Panc1 (cell line): ENCODE measurements at regions of chr1 and their contacts with region 1.

Region 1: DNA sequence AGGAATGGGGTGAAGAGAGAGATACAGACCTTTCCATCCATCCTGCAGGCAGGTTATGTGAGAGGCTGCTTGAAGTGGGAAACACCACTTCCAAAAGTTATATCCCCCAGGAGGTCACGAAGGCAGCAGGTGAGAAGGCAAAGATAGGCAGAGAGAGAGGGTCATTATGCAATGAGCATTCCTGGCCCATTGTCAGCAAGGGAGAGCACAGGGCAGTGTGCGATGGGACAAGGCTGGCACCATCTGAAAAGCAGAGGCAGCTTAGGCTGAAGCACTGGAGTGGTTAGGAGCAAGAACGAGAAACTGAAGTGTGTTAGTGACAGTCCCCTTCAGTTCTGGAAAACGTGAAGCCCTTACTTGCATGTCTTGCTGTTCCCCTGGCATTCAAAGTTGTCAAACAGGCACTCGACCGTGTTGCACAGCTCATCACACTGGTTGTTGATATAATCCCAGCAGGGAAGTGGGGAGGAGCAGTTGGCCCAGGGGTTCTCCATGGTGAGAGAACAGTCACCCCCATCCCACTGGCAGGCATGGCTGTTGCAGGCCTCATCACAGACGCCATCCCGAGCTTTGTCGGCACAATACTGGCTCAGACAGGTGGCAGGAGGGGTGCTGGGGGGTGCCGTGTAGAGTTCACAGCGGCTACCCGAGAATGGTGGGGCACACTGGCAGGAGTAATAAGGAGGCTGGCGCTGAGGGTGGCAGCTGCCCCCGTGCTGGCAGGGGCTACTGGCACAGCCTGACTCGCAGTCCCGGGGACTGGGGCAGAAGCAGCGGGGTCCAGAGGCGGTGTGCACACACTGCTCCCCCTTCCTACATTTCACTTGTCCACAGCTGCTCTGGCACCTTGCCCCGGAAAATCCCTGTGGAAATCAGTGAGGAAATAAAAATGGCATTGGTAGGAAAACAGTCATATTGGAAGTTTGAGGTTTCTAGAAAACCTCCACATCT is 28.9 kb upstream of the ADAM30 start:
- DNase-seq: no peak
- ATAC-seq: no peak
- H3K4me3 ChIP-seq: no peak overlapping the region
- H3K27ac ChIP-seq: no peak overlapping the region
- H3K4me1 ChIP-seq: no peaks in the 10 kb centered on the region
- H3K27me3 ChIP-seq: no peaks in the 10 kb centered on the region
- CTCF ChIP-seq: no peak

Region 2: GRCh38 chr1:119935373-119935772 is 10.2 kb after region 1 on chr1:
- CTCF ChIA-PET with region 1: no interaction called
- POLR2A ChIA-PET with region 1: no interaction called
- in situ Hi-C with region 1: no loop called
- intact Hi-C with region 1: loop called (anchors 2 kb)
- DNase-seq: no peak
- ATAC-seq: no peak
- H3K4me3 ChIP-seq: no peak overlapping the region
- H3K27ac ChIP-seq: no peak overlapping the region
- H3K4me1 ChIP-seq: no peaks in the 10 kb centered on the region
- H3K27me3 ChIP-seq: no peaks in the 10 kb centered on the region
- CTCF ChIP-seq: no peak

Region 3: GRCh38 chr1:119964673-119965363 is 39.6 kb after region 1 on chr1:
- CTCF ChIA-PET with region 1: no interaction called
- POLR2A ChIA-PET with region 1: no interaction called
- in situ Hi-C with region 1: no loop called
- intact Hi-C with region 1: loop called (anchors 5 kb)
- DNase-seq: no peak
- ATAC-seq: no peak
- H3K4me3 ChIP-seq: no peak overlapping the region
- H3K27ac ChIP-seq: no peak overlapping the region
- H3K4me1 ChIP-seq: no peaks in the 10 kb centered on the region
- H3K27me3 ChIP-seq: no peaks in the 10 kb centered on the region
- CTCF ChIP-seq: no peak